Uterus (tissue), 4 donors: ENCODE measurements at regions of chr1 and their contacts with region 1.

Region 1: DNA sequence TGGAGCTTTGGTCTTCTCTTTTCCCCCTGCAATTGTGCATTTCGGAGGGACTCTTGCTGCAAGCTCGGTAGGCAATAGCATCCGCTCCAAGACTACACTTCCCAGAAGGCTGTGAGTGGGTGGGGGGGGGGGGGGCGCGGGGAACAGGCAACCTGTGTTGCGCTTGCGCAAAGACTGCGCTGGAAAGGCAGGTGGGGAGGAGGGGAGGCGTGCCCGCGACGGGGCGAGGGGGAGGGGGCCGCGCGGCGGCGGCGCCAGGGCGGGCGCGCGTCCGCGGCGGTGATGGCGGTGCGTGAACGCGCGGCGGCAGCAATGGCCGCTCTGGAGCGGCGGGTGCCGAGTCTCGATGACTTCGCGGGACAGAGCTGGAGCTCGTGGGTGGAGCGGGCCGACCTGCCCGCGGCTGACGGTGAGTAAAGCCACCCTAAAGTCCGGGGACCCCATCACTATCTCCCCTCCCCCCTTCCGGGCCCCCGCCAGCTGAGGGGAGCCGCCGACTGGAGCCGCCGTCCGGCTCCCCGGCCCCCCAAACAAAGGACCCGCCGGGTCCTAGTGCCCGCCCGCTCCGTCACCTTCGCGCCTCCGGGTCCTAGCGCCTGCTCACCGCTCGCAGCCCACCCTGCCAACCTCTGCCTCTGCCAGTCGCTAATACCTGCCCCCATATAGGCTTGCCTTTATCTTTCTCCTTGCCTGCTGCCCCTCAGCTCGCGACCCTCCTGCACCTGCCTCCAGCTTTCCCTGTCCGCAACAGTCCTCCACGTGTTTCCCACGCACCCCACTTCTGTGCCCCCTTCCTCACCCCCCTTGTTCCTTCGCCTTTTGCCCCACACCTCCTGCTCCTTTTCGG is at the start of gene ATXN7L2:
- DNase-seq: peak; percentile 92 to 94
- H3K4me3 ChIP-seq: peak within 1 kb of the TSS; percentile 63 to 92
- H3K27ac ChIP-seq: peak within 1 kb of the TSS; percentile 95 to 99
- H3K4me1 ChIP-seq: peaks cover 0 to 11% of the 10 kb centered on the region in 2 donors
- H3K27me3 ChIP-seq: peaks cover 0 to 4% of the 10 kb centered on the region in 2 donors
- CTCF ChIP-seq: peak in 2 of 4 experiments; percentile 15 to 19
- POLR2A ChIP-seq: peak; percentile 43 to 77
- total RNA-seq, gene ATXN7L2: 4.1 to 6.7 (median 4.7) TPM

Region 2: DNA sequence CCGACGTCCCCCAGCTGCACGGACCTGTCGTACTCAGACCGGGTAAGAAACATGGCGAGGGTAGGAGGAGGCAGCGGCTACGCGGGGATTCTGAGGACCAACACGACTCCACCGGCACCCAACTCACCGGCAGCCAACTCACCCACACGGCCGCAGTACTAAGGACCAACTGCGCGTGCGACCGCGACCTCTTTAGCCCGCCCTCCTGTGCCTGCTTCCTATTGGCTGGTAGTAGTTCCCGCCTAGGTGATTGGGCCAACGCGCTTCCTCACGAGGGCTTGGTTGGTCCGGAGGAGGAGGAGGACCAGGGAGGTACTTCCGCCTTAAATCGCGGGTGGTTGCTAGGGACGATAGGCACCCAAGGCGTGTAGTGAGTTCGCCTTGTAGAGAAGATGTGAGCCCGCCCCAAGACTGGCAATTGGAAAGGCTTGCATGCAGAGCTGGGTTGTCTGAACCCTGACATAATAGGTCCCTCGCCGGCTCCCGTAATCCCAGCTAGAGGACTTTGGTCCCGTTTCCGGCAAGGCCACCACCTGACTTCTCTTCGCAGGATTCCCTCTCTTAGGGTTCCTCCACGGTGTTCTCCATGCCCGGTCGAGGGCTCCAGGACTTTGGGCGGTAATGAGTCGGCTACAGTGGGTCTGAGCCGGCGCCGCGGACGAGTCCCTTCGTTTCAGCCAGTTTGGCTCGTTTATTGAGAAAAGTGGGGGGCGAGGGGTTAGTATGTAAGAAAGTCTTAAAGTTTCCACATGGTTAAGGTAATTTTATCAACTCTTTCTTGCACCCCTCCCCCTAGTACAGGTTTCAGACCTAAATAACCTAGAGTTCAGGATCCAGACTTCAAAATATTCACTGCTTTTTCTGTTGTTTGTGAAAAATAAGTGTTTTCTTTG is 57.4 kb before region 1 on chr1 and contains the start of gene PSMA5:
- intact Hi-C with region 1: loop called (anchors 10 kb)
- DNase-seq: peak; percentile 94 to 97
- H3K4me3 ChIP-seq: peak within 1 kb of the TSS; percentile 80 to 90
- H3K27ac ChIP-seq: peak within 1 kb of the TSS; percentile 70 to 86
- H3K4me1 ChIP-seq: peaks cover 0 to 16% of the 10 kb centered on the region in 2 donors
- H3K27me3 ChIP-seq: no peaks in the 10 kb centered on the region
- CTCF ChIP-seq: no peak
- POLR2A ChIP-seq: peak in 1 of 2 donors; percentile 71
- total RNA-seq, gene PSMA5: 12.6 to 65.8 (median 40.7) TPM